Mucosa of descending colon (tissue), 3 donors: ENCODE measurements at regions of chr2 and their contacts with region 1.

Region 1: DNA sequence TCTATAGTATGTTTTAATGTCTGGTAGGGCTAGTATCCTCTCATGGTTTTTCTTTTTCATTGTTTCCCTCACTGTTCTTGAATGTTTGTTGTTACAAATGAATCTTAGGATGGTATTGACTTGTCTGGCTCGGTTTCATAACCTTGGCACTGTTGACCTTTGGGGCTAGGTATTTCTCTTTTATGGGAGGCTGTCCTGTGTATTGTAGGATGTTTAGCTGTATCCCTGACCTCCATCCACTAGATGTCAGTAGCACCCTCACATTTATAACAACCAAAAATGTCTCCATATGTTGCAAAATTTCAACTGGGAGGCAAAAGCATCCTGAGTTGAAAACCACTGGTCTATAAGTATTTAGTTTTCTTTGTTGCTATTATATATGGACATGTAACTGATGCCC is 7.0 kb upstream of the AOX1 start:
- DNase-seq: peak in 1 of 3 donors; percentile 55
- ATAC-seq: peak; percentile 84
- H3K4me3 ChIP-seq: no peak overlapping the region
- H3K4me1 ChIP-seq: no peaks in the 10 kb centered on the region
- CTCF ChIP-seq: peak; percentile 15

Region 2: DNA sequence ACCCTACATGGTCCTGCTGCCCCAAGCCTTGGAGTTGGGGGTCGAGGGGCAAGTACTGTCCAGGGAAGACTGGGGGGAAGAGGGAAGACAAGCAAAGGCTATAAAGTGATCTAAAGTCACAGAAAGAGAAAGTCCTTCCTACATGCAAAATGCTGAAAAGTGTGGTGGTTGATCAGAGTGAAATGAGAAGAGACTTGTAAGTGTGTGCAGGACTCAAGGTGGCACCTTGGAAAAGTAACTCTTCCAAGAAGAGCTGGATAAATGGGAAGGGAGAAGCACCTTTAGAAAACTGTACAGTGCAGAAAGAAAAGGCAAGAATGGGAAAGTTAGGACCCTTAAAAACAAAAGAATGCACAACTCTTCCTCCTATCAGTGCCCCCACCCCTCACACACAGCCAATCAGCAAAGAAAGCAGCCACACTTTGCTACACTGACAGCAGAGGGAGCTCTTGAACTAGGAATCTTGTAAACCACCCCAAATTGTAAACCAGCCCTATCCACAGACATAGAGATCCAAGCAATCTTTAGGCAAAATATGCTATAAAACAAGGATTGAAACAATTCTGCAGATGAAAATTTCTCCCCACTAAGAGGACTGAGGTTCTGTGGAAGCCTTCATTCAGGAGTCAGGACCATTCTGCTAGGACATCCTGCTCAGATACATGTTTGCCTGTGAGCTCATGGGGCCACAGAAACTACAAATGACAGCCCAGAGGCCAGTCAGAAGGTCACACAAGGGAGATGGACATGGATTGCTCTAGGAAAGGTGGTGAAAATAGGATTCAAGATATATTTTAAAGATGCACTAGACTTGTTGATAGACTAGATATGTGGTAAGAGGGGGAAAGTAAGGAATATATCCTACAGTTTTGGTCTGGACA is 874.2 kb before region 1 on chr2:
- intact Hi-C with region 1: no loop called
- DNase-seq: peak in 1 of 3 donors; percentile 76
- ATAC-seq: peak; percentile 94
- H3K4me3 ChIP-seq: no peak overlapping the region
- H3K4me1 ChIP-seq: no peaks in the 10 kb centered on the region
- CTCF ChIP-seq: peak; percentile 61

Region 3: DNA sequence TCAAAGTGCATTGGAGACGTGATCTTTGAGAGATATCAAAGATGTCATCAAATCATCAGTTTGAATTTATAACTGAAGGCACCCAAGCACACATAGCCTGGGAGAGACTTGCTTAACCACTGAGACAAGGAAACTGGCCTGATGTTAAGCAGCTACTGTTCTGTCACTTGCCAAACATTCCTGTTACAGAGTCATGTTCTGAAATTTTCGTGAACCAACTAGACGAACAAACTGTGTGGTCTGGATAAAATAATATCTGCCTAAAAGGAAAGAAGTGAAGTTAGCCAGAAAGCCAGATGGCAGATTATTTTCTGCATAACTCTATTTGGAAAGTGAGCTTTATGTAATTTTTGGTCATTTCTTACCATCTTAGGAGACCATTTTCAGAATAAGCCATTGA is 220.9 kb before region 1 on chr2:
- intact Hi-C with region 1: no loop called
- DNase-seq: no peak
- ATAC-seq: no peak
- H3K4me3 ChIP-seq: no peak overlapping the region
- H3K4me1 ChIP-seq: no peaks in the 10 kb centered on the region
- CTCF ChIP-seq: no peak

Region 4: DNA sequence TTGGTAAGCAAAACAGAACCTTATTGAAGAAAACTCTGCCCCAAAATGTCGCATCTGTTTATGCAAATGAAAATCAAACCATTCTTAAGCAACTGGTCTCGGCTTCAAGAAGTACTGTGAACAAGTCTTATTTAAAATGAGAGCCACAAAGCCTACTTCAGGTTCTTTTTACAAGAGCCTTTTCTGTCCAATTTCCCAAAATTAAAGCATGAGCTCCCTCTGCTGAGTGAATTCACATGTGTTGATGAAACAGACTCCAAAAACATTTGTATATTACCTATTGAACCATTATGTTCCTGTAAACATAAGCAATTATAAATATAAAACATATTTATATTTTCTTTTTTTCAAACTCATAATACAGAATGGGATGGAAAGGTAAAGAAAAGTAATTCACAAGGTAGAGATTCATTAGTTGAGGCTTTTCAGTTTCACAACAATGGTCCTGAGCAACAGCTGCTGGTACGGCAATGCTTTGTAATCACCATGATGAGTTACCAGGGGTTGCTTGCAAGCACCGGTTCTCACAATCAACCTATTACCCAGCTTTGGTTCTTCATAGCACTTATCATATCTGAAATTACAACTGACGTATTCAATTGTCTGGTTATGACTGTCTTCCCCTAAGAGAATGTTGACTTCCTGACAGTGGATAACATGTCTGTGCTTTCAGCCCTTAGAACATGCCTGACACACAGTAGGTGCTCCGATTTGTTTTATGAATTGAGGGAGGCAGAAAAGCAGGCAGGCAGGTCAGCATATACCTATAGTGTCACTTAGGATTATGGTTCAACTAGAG is 124.5 kb after region 1 on chr2:
- intact Hi-C with region 1: loop called in 1 of 2 experiments (anchors 2 kb)
- DNase-seq: peak in 1 of 3 donors; percentile 78
- ATAC-seq: peak; percentile 34
- H3K4me3 ChIP-seq: no peak overlapping the region
- H3K4me1 ChIP-seq: no peaks in the 10 kb centered on the region
- CTCF ChIP-seq: no peak

Region 5: DNA sequence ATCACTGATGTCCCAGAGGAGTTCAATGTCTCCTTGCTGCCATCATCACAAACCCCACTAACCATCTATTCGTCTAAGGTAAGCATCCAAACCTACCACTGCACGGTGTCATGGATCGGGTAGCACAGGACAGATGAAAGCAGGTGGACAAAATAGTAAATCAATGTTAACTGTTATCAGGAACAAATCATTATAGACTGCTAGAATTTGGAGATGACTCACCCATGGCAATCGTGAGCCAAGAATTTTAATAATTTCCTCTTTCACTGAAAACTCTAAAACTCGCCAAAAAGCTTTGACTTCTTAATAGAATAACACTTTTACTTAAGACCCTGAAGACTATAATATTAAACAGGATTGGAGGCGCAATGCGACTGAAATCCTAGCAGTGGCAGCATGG is 199.3 kb after region 1 on chr2:
- intact Hi-C with region 1: no loop called
- DNase-seq: no peak
- ATAC-seq: no peak
- H3K4me3 ChIP-seq: no peak overlapping the region
- H3K4me1 ChIP-seq: no peaks in the 10 kb centered on the region
- CTCF ChIP-seq: no peak